Activated naive CD4-positive, alpha-beta T cell treated with anti-CD3 and anti-CD28 coated beads for 36 hours (primary cell): ENCODE measurements at regions of chr1 and their contacts with region 1.

Region 1: GRCh38 chr1:181166377-181167196 is 78.1 kb downstream of the IER5 start:
- DNase-seq: peak; percentile 88
- H3K4me3 Mint-ChIP-seq: no peak overlapping the region
- H3K27ac Mint-ChIP-seq: no peak overlapping the region
- H3K4me1 Mint-ChIP-seq: peaks cover 5% of the 10 kb centered on the region
- H3K27me3 Mint-ChIP-seq: no peaks in the 10 kb centered on the region

Region 2: GRCh38 chr1:180515864-180516388 is 650.7 kb before region 1 on chr1:
- CTCF ChIA-PET with region 1: interaction called, 6 read pairs
- intact Hi-C with region 1: loop called (anchors 1 kb)
- DNase-seq: peak; percentile 76
- H3K4me3 Mint-ChIP-seq: no peak overlapping the region
- H3K27ac Mint-ChIP-seq: no peak overlapping the region
- H3K4me1 Mint-ChIP-seq: peaks cover 3% of the 10 kb centered on the region
- H3K27me3 Mint-ChIP-seq: peaks cover 3% of the 10 kb centered on the region

Region 3: GRCh38 chr1:180533266-180533987 is 633.2 kb before region 1 on chr1:
- CTCF ChIA-PET with region 1: no interaction called
- intact Hi-C with region 1: loop called (anchors 1 kb)
- DNase-seq: peak; percentile 87
- H3K4me3 Mint-ChIP-seq: no peak overlapping the region
- H3K27ac Mint-ChIP-seq: no peak overlapping the region
- H3K4me1 Mint-ChIP-seq: no peaks in the 10 kb centered on the region
- H3K27me3 Mint-ChIP-seq: no peaks in the 10 kb centered on the region

Region 4: GRCh38 chr1:180680558-180681144 is 485.9 kb before region 1 on chr1:
- CTCF ChIA-PET with region 1: no interaction called
- intact Hi-C with region 1: no loop called
- DNase-seq: no peak
- H3K4me3 Mint-ChIP-seq: no peak overlapping the region
- H3K27ac Mint-ChIP-seq: no peak overlapping the region
- H3K4me1 Mint-ChIP-seq: no peaks in the 10 kb centered on the region
- H3K27me3 Mint-ChIP-seq: no peaks in the 10 kb centered on the region

Region 5: GRCh38 chr1:180881806-180882509 is 284.6 kb before region 1 on chr1:
- CTCF ChIA-PET with region 1: interaction called, 7 read pairs
- intact Hi-C with region 1: loop called (anchors 1 kb)
- DNase-seq: no peak
- H3K4me3 Mint-ChIP-seq: no peak overlapping the region
- H3K27ac Mint-ChIP-seq: no peak overlapping the region
- H3K4me1 Mint-ChIP-seq: peaks cover 2% of the 10 kb centered on the region
- H3K27me3 Mint-ChIP-seq: no peaks in the 10 kb centered on the region

Region 6: GRCh38 chr1:181099152-181100014 is 67.2 kb before region 1 on chr1:
- CTCF ChIA-PET with region 1: no interaction called
- intact Hi-C with region 1: loop called (anchors 1 kb)
- DNase-seq: peak; percentile 80
- H3K4me3 Mint-ChIP-seq: peak overlapping the region; percentile 67
- H3K27ac Mint-ChIP-seq: peak overlapping the region; percentile 99
- H3K4me1 Mint-ChIP-seq: peaks cover 88% of the 10 kb centered on the region
- H3K27me3 Mint-ChIP-seq: no peaks in the 10 kb centered on the region

Region 7: GRCh38 chr1:181152892-181153633 is 13.5 kb before region 1 on chr1:
- CTCF ChIA-PET with region 1: interaction called, 13 read pairs
- intact Hi-C with region 1: no loop called
- DNase-seq: no peak
- H3K4me3 Mint-ChIP-seq: no peak overlapping the region
- H3K27ac Mint-ChIP-seq: no peak overlapping the region
- H3K4me1 Mint-ChIP-seq: peaks cover 37% of the 10 kb centered on the region
- H3K27me3 Mint-ChIP-seq: no peaks in the 10 kb centered on the region